HEK293 (cell line): ENCODE measurements at regions of chr9 and their contacts with region 1.

Region 1: GRCh38 chr9:77166193-77166592 is 11.1 kb upstream of the VPS13A start:
- H3K4me3 ChIP-seq: no peak overlapping the region
- H3K27ac ChIP-seq: no peak overlapping the region
- H3K4me1 ChIP-seq: no peaks in the 10 kb centered on the region
- CTCF ChIP-seq: no peak

Region 2: GRCh38 chr9:77149879-77150278 is 16.3 kb before region 1 on chr9:
- CTCF ChIA-PET with region 1: interaction called, 21 read pairs
- POLR2A ChIA-PET with region 1: no interaction called
- H3K4me3 ChIP-seq: no peak overlapping the region
- H3K27ac ChIP-seq: no peak overlapping the region
- H3K4me1 ChIP-seq: no peaks in the 10 kb centered on the region
- CTCF ChIP-seq: no peak

Region 3: GRCh38 chr9:77177161-77177893 is 11.1 kb after region 1 on chr9 and contains the start of gene VPS13A:
- CTCF ChIA-PET with region 1: interaction called, 20 read pairs
- POLR2A ChIA-PET with region 1: interaction called, 4 read pairs
- H3K4me3 ChIP-seq: peak within 1 kb of the TSS; percentile 71
- H3K27ac ChIP-seq: peak within 1 kb of the TSS; percentile 86
- H3K4me1 ChIP-seq: peaks cover 13% of the 10 kb centered on the region; the same call in 1 of the 2 replicates
- CTCF ChIP-seq: peak; percentile 74; the same call in 1 of the 2 replicates

Region 4: DNA sequence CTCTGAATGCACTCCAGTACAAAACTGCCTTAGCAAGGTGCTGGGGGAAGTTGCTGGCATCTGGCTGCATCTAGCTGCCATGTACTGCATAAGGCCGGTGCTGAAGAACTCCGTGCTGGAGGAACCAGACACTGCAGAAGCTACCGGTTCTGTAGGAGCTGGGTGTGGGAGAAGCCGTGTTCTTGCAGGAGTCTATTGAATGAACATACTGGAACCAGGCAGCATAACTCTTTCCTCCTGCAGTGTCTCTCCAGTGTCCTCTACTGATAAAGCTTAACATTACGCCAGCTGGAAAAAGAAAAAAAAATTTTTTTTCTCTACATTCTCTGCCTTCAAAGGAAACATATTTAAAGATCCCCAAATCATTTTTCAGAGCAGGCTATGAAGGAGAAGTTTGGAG is 49.7 kb after region 1 on chr9:
- CTCF ChIA-PET with region 1: interaction called, 24 read pairs
- POLR2A ChIA-PET with region 1: no interaction called
- H3K4me3 ChIP-seq: no peak overlapping the region
- H3K27ac ChIP-seq: no peak overlapping the region
- H3K4me1 ChIP-seq: no peaks in the 10 kb centered on the region
- CTCF ChIP-seq: no peak

Region 5: DNA sequence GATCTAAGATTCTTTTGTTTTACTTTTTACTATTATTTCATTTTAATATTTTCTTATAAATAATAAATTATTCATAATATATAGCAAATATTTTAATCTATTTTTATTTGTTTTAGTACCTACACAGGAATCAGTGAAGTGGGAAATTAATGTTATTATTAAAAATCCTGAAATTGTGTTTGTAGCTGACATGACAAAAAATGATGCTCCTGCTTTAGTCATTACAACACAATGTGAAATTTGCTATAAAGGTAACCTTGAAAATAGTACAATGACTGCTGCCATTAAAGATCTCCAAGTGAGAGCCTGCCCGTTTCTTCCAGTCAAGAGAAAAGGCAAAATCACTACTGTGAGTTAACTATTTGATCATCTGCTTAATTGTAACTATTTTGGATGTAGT is 149.9 kb after region 1 on chr9:
- CTCF ChIA-PET with region 1: no interaction called
- POLR2A ChIA-PET with region 1: no interaction called
- H3K4me3 ChIP-seq: no peak overlapping the region
- H3K27ac ChIP-seq: no peak overlapping the region
- H3K4me1 ChIP-seq: no peaks in the 10 kb centered on the region
- CTCF ChIP-seq: no peak

Region 6: DNA sequence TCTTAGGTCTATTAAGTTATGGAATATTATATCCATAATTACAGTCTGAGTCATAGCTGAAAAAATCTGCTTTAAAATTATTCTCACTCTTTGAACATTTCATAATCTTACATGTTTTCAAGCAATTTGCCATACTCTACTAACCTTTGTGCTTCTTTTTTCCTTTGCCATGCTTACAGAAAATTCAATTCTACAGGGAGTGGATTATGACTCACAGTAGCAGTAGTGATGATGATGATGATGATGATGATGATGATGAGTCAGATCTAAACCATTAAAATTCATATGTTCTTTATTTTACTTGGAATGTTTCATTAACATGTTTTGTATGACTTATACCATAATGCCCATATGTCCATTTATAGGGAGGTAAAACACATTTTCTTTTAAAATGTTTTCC is 218.2 kb after region 1 on chr9:
- CTCF ChIA-PET with region 1: no interaction called
- POLR2A ChIA-PET with region 1: no interaction called
- H3K4me3 ChIP-seq: no peak overlapping the region
- H3K27ac ChIP-seq: no peak overlapping the region
- H3K4me1 ChIP-seq: no peaks in the 10 kb centered on the region
- CTCF ChIP-seq: no peak